ENCODE measurements at regions of chr1 and their contacts with region 1.

Region 1: DNA sequence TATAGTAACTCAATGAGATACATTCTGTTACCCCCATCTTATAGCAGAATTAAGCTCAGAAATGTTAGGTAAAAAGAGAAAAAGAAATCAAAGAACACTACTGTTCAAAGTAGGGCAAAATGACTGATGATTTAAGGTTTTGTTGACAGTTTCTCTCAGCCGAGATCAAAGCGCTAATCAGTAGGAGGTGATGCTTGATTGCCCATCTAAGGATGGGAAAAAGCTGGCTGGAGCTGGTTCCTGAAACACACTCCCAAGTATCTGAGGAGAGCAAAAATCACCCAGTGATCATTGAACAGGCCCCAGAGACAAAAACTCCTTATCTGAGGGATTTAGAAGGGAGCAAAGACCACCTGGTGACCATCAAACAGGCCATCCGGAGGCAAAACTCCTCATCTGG is 64.5 kb upstream of the CSF1 start:
- DNase-seq: no peak
- ATAC-seq: no peak
- H3K4me3 ChIP-seq: no peak overlapping the region
- H3K27ac ChIP-seq: no peak overlapping the region
- H3K4me1 ChIP-seq: peaks cover 0 to 6% (median 0%) of the 10 kb centered on the region in 12 donors
- H3K27me3 ChIP-seq: no peaks in the 10 kb centered on the region
- CTCF ChIP-seq: no peak
- POLR2A ChIP-seq: no peak

Region 2: GRCh38 chr1:109148987-109149561 is 697.1 kb before region 1 on chr1:
- intact Hi-C with region 1: no loop called
- DNase-seq: no peak
- ATAC-seq: no peak
- H3K4me3 ChIP-seq: no peak overlapping the region
- H3K27ac ChIP-seq: no peak overlapping the region
- H3K4me1 ChIP-seq: peaks cover 0 to 17% (median 6%) of the 10 kb centered on the region in 12 donors
- H3K27me3 ChIP-seq: no peaks in the 10 kb centered on the region
- CTCF ChIP-seq: no peak
- POLR2A ChIP-seq: no peak

Region 3: GRCh38 chr1:109814993-109815786 is 31.0 kb before region 1 on chr1:
- intact Hi-C with region 1: loop called in 1 of 10 experiments (anchors 5 kb)
- DNase-seq: no peak
- ATAC-seq: no peak
- H3K4me3 ChIP-seq: no peak overlapping the region
- H3K27ac ChIP-seq: no peak overlapping the region
- H3K4me1 ChIP-seq: peaks cover 4 to 50% (median 13%) of the 10 kb centered on the region in 12 donors
- H3K27me3 ChIP-seq: no peaks in the 10 kb centered on the region
- CTCF ChIP-seq: no peak
- POLR2A ChIP-seq: no peak

Region 4: DNA sequence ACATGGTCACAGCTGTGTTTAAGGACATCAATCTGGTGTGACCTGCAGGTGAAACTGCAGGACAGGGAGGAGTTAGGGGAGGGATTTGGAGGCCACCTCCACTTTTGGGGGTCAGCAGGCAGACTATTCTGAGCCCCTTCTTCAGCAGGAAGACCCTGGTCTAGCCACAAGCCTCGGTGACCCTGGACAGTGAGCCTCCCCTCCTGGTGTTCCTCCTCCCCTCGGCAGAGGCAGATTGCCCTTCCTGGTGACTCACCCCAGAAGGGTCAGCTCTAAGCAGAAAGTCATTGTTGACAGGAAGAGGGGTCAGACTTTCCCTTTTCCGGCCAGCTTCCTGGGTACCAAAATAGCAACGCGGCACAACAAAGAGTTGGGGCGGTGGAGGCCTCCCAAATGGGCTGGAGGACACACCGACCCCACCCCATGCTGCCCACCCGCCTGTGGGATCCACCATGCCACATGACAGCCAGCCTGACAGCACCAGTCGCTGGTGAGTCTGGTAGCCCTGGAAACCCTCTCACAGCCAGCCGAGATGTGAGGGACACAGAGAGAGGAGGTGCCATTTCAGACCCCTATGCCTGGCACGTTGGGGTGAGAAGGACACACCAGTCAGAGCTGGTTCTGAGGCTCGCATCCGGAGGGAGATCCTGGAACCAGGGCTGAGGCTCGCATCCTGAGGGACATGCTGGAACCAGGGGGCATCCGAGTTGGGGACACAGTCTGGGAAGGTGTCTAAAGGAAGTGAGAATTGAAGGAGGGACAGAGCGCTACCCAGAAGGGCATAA is 49.8 kb after region 1 on chr1:
- intact Hi-C with region 1: loop called in 1 of 10 experiments (anchors 5 kb)
- DNase-seq: peak; percentile 63 to 81 (median 77)
- ATAC-seq: peak; percentile 44 to 84 (median 76)
- H3K4me3 ChIP-seq: peak overlapping the region in 1 of 12 donors; percentile 18
- H3K27ac ChIP-seq: peak overlapping the region; percentile 12 to 83 (median 68)
- H3K4me1 ChIP-seq: peaks cover 0 to 79% (median 52%) of the 10 kb centered on the region in 12 donors
- H3K27me3 ChIP-seq: no peaks in the 10 kb centered on the region
- CTCF ChIP-seq: no peak
- POLR2A ChIP-seq: no peak

Region 5: GRCh38 chr1:110003747-110004630 is 157.8 kb after region 1 on chr1:
- intact Hi-C with region 1: no loop called
- DNase-seq: peak in 4 of 5 donors; percentile 33 to 78 (median 56)
- ATAC-seq: peak; percentile 38 to 87 (median 80)
- H3K4me3 ChIP-seq: peak overlapping the region in 3 of 12 donors; percentile 1 to 15 (median 10)
- H3K27ac ChIP-seq: peak overlapping the region; percentile 4 to 78 (median 66)
- H3K4me1 ChIP-seq: peaks cover 5 to 63% (median 50%) of the 10 kb centered on the region in 12 donors
- H3K27me3 ChIP-seq: no peaks in the 10 kb centered on the region
- CTCF ChIP-seq: no peak
- POLR2A ChIP-seq: no peak

Region 6: DNA sequence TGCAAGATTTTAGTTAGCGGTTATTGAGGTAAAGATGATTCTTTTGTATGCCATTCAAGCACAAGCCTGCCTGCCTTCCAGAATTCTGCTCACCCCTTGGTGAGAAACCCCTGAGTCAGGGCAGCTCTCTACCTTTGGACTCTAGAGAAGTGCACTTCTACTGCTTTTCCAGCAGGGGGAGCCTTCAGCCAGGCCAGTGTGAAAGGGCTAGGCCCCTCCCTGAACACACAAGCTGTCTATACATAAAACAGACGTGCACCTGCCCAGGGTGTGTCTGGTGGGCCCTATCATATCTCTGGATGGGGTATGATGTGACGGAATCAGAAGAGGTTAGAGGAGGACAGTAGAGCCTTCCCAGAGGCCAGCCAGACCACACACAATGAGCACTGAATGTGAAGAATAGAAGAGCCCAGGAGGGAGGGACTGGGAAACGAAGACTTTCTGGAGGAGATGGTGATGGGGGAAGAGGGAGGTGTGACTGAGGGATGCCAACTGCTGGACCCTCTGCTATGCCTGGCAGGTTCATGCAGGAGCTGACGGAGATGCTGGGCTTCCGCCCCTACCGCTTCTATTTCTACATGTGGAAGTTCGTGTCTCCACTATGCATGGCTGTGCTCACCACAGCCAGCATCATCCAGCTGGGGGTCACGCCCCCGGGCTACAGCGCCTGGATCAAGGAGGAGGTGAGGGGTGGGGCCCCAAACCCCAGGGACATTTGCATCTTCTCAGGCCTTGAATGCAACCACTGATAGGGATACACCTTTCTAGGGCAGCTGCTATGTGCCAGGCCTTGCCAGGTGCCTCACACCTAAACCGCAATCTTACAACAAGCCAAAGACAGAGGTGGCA is 351.0 kb after region 1 on chr1:
- intact Hi-C with region 1: no loop called
- DNase-seq: no peak
- ATAC-seq: peak in 3 of 4 donors; percentile 59 to 68 (median 65)
- H3K4me3 ChIP-seq: no peak overlapping the region
- H3K27ac ChIP-seq: no peak overlapping the region
- H3K4me1 ChIP-seq: no peaks in the 10 kb centered on the region
- H3K27me3 ChIP-seq: no peaks in the 10 kb centered on the region
- CTCF ChIP-seq: peak; percentile 76 to 96 (median 88)
- POLR2A ChIP-seq: no peak

Region 7: GRCh38 chr1:110390692-110391245 is 544.6 kb after region 1 on chr1 and contains the start of gene SLC16A4:
- intact Hi-C with region 1: no loop called
- DNase-seq: peak in 1 of 5 donors; percentile 17
- ATAC-seq: peak; percentile 42 to 89 (median 84)
- H3K4me3 ChIP-seq: peak within 1 kb of the TSS in 10 of 12 donors; percentile 23 to 58 (median 44)
- H3K27ac ChIP-seq: peak within 1 kb of the TSS in 9 of 12 donors; percentile 2 to 69 (median 55)
- H3K4me1 ChIP-seq: peaks cover 0 to 4% (median 0%) of the 10 kb centered on the region in 12 donors
- H3K27me3 ChIP-seq: no peaks in the 10 kb centered on the region
- CTCF ChIP-seq: no peak
- POLR2A ChIP-seq: no peak
- total RNA-seq, gene SLC16A4: 1.6 to 4.8 (median 2.3) TPM